ENCODE measurements at regions of chr7 and their contacts with region 1.

Region 1: DNA sequence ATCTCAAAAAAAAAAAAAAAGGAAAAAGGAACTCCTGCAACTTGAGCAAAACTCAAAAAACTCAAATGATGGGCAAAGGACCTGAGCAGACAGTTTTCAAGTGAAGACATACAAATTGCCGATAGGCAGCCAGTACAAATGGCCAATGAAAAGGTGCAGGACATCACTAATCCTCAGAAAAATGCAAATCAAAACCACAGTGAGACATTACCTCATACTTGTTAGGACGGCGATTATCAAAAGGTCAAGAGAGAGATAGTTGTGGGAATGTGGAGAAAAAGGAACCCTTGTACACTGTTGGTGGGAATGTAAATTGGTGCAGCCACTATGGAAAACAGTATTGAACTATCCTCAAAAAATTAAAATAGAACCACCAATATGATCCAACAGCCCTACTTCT is 16.8 kb downstream of the SVOPL start:
- DNase-seq: no peak
- ATAC-seq: no peak
- H3K4me3 ChIP-seq: no peak overlapping the region
- H3K4me3 Mint-ChIP-seq: no peak overlapping the region
- H3K27ac ChIP-seq: no peak overlapping the region
- H3K27ac Mint-ChIP-seq: no peak overlapping the region
- H3K4me1 ChIP-seq: no peaks in the 10 kb centered on the region
- H3K4me1 Mint-ChIP-seq: peaks cover 0 to 7% (median 0%) of the 10 kb centered on the region in 3 donors
- H3K27me3 ChIP-seq: peaks cover 0 to 13% of the 10 kb centered on the region in 2 experiments
- H3K27me3 Mint-ChIP-seq: peaks cover 5 to 6% of the 10 kb centered on the region in 2 donors

Region 2: DNA sequence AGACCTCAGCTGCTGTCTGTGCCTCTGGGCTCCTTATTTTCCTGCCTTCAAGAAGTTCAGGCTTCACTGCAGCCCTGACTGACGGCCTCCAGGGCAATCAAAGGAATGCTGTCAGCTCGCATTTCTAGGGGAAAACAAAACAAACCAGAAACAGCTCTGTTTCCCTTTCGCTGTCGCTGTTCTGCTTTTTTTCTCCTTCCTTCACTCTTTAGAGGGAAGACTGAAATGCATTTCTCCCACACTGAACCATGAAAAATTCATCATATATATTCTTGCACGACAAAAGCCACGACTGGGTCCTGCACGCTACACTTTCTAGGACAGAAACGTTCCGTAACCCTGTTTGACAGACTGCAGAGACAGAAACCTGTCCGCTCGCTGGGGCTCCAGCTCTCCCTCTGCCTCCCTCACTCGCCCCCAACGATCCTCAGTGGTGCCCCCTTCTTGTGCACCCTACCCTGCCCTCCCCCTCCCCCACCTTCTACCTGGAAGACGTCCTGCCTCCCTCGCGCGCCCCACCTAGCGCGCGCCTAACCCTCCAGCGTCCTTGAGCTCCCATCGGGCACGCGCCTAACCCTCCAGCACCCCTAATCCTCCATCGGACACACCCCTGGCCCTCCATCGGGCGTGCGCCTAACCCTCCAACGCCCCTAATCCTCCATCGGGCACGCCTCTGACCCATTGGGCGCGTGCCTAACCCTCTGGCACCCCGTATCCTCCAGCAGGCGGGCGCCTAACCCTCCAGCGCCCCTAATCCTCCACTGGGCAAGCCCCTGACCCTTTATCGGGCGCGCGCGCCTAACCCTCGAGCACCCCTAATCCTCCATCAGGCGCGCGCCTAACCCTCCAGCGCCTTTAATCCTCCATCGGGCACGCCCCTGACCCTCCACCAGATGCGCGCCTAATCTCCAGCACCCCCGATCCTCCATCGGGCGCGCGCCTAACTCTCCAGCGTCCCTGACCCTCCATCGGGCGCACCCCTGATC is 20.3 kb before region 1 on chr7:
- CTCF ChIA-PET with region 1: interaction called in 1 of 2 experiments, 11 read pairs
- POLR2A ChIA-PET with region 1: no interaction called
- DNase-seq: peak in 3 of 35 experiments; percentile 3 to 7 (median 4)
- ATAC-seq: no peak
- H3K4me3 ChIP-seq: peak overlapping the region; percentile 32 to 64
- H3K4me3 Mint-ChIP-seq: peak overlapping the region; percentile 53 to 78 (median 63)
- H3K27ac ChIP-seq: no peak overlapping the region
- H3K27ac Mint-ChIP-seq: no peak overlapping the region
- H3K4me1 ChIP-seq: peaks cover 0 to 6% of the 10 kb centered on the region in 2 experiments
- H3K4me1 Mint-ChIP-seq: peaks cover 5 to 10% (median 8%) of the 10 kb centered on the region in 3 donors
- H3K27me3 ChIP-seq: peaks cover 0 to 21% of the 10 kb centered on the region in 2 experiments
- H3K27me3 Mint-ChIP-seq: peaks cover 0 to 42% of the 10 kb centered on the region in 2 donors

Measured in T-cell (primary cell).